Activated B cell treated with CpG ODN at 0.5 μM for 24 hours (primary cell): ENCODE measurements at regions of chr4 and their contacts with region 1.

Region 1: DNA sequence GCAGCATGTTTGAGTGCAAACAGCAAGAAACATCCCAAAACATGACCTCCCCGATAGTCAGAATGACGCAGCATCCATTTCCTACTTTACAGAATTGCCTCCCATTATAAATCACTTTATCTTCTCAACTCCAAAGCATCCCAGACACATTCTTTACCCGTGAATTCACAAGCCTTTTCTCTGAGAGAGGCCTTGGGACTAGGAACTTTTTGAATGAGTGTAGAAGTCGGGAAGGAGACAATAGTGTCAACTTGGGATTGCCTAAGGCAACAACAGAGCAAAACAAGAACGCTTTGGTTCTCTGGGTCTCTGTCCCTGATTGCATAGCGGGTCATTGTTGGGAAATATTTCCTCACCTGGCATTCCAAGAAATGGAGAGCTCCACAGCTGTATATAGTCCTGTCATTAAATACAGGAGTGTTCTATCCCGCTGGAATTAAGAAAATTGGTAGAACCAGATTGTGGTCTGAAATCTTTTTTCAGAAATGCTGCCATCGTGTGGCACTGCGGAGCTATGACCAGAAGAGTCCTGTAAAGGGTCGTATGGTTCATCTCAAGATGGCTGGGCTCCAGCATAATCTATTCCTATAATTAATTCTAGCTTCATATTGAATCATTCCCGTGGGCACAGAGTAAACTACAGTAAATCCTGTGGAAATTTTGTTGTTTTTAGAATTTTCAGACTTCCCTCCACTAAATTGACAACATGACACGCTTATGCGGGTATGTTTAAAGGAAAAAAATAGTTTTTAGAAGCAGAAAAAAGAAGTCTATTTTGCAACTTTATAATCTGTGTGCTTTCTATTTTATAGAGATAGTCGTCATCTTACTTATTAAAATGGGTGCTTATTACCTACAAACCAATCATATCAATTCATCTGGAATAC is 2.0 kb upstream of the SPP1 start:
- DNase-seq: no peak
- ATAC-seq: peak; percentile 47
- H3K4me3 Mint-ChIP-seq: no peak overlapping the region
- H3K27ac Mint-ChIP-seq: no peak overlapping the region
- H3K4me1 Mint-ChIP-seq: peaks cover 9% of the 10 kb centered on the region
- H3K27me3 Mint-ChIP-seq: peaks cover 9% of the 10 kb centered on the region
- CTCF ChIP-seq: no peak

Region 2: GRCh38 chr4:87679449-87680169 is 293.9 kb before region 1 on chr4:
- CTCF ChIA-PET with region 1: no interaction called
- POLR2A ChIA-PET with region 1: no interaction called
- intact Hi-C with region 1: loop called (anchors 5 kb)
- DNase-seq: no peak
- ATAC-seq: no peak
- H3K4me3 Mint-ChIP-seq: no peak overlapping the region
- H3K27ac Mint-ChIP-seq: no peak overlapping the region
- H3K4me1 Mint-ChIP-seq: no peaks in the 10 kb centered on the region
- H3K27me3 Mint-ChIP-seq: no peaks in the 10 kb centered on the region
- CTCF ChIP-seq: peak; percentile 61

Region 3: DNA sequence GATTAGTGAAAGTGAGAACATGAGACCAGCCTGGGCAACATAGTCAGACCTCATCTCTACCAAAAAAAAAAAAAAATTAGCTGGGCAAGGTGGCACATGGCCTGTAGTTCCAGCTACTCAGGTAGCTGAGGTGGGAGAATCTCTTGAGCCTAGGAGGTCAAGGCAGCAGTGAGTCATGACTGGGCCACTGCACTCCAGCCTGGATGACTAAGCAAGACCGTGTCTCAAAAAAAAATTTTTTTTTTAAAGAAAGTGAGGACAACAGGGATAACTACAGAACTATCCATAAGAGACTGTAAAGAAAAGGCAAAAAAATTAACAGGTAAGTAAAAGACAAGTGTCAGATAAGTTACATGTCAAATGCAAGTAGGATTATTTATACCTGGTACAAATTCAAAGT is 11.5 kb before region 1 on chr4:
- CTCF ChIA-PET with region 1: interaction called, 13 read pairs
- POLR2A ChIA-PET with region 1: no interaction called
- intact Hi-C with region 1: no loop called
- DNase-seq: no peak
- ATAC-seq: no peak
- H3K4me3 Mint-ChIP-seq: no peak overlapping the region
- H3K27ac Mint-ChIP-seq: no peak overlapping the region
- H3K4me1 Mint-ChIP-seq: no peaks in the 10 kb centered on the region
- H3K27me3 Mint-ChIP-seq: no peaks in the 10 kb centered on the region
- CTCF ChIP-seq: no peak